AG04449 (cell line): ENCODE measurements at regions of chr14 and their contacts with region 1.

Region 1: DNA sequence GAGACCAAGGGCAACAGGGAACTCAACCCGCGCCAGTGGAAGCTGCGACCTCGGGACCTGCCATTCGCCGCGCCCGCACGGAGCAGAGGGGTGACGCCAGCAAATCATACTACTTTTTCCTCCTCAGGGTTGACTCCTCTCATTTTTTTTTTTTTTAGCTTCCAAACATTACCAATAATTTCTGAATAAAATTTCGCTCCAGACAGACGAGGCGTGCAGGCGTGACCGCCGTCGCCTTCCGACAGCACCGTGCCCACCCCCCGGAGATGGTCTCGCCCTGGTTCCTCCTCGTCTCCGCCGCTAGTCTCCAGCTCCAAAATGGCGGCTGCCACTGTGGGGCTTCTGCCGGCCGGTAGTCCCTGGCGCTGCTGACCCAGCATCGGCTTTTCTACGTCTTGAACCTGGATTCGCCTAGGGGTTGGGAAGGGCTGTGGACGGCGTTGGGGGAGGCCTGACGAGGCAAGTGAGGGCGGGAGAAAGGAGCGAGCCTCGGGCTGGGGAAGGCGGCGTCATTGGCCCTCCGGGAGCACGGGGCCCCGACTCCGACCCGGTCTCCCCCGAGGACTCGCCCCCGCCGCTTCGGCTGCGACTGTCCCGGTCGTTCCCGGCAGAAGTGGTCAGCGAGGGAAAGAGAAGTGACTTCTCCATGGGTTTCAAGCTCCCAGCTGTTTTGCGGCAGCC is at the starts of genes CPSF2 and NDUFB1:
- DNase-seq: no peak
- H3K4me3 ChIP-seq: peak within 1 kb of the TSS; percentile 98
- CTCF ChIP-seq: no peak

Region 2: DNA sequence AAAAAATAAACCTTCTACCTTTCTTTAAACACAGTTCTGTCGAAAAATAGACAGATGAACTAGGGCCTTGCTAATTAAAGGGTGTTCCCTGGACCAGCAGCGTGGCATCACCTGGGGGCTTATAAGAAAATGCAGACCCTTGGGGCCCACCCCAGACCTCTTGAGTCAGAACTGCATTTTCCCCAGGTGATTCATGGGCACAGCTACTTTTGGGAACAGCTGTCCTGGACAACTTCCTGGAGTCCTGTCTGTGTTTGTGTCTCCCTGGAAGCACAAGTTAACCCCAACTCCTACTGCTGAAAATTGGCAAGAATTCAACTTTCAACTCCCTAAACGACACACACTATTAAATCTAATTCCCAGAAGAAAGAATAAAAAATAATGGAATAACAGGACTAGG is 192.1 kb before region 1 on chr14:
- CTCF ChIA-PET with region 1: no interaction called
- POLR2A ChIA-PET with region 1: no interaction called
- DNase-seq: no peak
- H3K4me3 ChIP-seq: no peak overlapping the region
- CTCF ChIP-seq: no peak

Region 3: GRCh38 chr14:92093320-92093719 is 28.5 kb before region 1 on chr14:
- CTCF ChIA-PET with region 1: no interaction called
- POLR2A ChIA-PET with region 1: no interaction called
- DNase-seq: no peak
- H3K4me3 ChIP-seq: no peak overlapping the region
- CTCF ChIP-seq: no peak

Region 4: GRCh38 chr14:92135267-92135666 is 13.5 kb after region 1 on chr14:
- CTCF ChIA-PET with region 1: interaction called, 56 read pairs
- POLR2A ChIA-PET with region 1: interaction called, 10 read pairs
- DNase-seq: no peak
- H3K4me3 ChIP-seq: no peak overlapping the region
- CTCF ChIP-seq: peak; percentile 33

Region 5: GRCh38 chr14:92400579-92401444 is 279.0 kb after region 1 on chr14:
- CTCF ChIA-PET with region 1: no interaction called
- POLR2A ChIA-PET with region 1: no interaction called
- DNase-seq: no peak
- H3K4me3 ChIP-seq: no peak overlapping the region
- CTCF ChIP-seq: no peak